Activated B cell treated with CpG ODN at 0.5 μM for 24 hours (primary cell): ENCODE measurements at regions of chr11 and their contacts with region 1.

Region 1: DNA sequence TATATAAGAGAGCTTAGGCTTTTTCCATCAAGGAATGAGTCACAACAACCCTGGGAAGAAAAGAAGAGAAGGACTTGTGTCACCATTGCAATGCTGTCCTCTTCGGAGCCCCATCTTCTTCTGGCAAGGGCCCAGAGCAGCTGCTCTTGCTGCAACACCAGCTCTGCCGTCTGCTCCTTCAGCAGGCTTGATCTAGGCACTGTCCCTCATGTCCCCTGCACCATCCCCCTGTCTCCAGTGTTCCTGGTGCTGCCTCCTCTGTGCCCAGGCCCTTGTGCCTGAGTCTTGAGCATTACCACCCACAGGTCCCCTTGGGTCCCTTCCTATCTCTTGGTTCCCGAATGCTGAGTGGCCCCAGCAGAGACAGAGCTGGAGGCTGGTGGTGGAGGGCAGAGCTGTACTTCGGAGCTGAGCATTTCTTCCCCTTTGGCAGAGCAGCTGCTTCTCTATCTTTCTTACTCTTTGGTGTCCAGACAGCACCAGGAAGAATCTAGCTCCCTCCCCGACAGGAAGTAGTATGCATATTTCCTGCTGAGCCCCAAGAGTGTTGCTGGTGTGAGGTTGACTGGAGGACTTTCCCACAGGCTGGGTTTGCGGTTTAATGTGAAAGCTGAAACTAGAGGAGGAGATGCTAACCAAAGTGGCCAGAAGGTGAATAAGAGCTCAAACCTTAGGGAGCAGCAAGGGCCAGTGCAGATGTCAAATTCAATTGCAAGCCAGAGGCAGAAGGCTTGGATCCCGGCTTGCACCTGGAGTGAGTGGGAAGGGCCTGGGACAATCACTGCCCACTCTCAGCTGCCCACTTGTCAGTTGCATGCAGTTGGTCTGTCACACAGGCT is 27.8 kb downstream of the WEE1 start:
- DNase-seq: peak; percentile 53
- ATAC-seq: peak; percentile 76
- H3K4me3 Mint-ChIP-seq: peak overlapping the region; percentile 85
- H3K27ac Mint-ChIP-seq: peak overlapping the region; percentile 96
- H3K4me1 Mint-ChIP-seq: peaks cover 59% of the 10 kb centered on the region
- H3K27me3 Mint-ChIP-seq: no peaks in the 10 kb centered on the region
- CTCF ChIP-seq: no peak

Region 2: DNA sequence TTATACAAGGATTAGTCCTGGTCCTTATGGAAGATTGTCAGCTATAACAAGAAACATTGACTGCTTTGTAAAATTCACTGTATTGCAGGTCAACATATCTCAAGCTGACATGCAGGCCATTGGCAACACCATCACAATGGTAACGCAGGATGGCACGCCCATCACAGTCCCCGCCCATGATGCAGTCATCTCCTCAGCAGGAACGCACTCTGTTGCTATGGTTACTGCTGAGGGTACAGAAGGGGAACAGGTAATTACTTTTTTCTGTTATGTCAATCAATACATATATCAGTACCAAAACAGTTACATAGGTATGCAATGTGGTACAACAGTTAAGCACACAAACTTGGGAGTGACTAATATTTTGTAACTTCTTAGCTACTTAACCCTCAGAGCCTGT is 85.1 kb before region 1 on chr11:
- CTCF ChIA-PET with region 1: no interaction called
- POLR2A ChIA-PET with region 1: no interaction called
- intact Hi-C with region 1: no loop called
- DNase-seq: no peak
- ATAC-seq: no peak
- H3K4me3 Mint-ChIP-seq: no peak overlapping the region
- H3K27ac Mint-ChIP-seq: no peak overlapping the region
- H3K4me1 Mint-ChIP-seq: peaks cover under 1% of the 10 kb centered on the region
- H3K27me3 Mint-ChIP-seq: no peaks in the 10 kb centered on the region
- CTCF ChIP-seq: no peak

Region 3: DNA sequence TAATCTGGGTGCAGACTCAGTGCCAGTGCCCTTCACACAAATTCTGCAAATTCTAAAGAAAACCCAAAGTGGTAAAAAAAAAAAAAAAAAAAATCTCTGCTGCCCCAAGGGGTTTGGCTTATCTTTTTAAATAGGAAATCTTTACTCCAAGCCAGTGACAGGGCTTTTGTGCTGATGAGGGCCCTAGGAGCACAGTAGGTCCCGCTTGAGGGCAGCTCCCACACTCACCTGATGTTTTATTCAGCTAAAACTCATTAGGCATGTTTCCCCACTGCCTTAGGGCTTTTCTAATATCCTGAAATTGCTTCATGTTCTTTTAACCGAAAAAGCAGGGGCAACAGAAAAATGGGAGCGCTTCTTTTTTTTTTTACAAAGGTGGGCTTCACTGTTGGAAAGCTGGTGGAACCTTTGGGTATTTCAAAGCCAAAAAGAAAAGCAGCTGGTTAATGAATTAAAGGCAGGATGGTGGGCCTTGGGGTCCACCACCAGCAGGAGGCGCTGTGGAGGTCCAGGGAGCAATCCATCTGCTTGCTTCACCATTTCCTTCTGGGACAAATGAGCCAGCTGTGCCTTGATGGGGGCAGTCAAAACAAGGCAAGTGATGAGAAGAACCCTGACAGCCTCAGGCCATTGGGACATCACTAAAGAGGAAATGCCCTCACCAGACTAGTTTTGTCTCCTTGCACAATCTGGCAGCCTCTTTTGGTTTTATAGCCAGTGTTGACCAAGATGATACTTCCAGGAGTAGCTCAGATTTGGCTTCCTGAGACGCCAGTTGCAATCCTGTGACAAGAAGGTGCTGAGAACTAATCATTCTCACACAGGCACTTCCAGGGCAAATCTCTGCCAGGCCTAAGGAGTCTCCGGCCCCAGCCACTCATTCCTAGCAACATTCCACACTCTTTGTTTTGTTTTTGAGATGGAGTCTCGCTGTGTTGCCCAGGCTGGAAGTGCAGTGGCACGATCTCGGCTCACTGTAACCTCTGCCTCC is 66.2 kb before region 1 on chr11:
- CTCF ChIA-PET with region 1: interaction called, 22 read pairs
- POLR2A ChIA-PET with region 1: interaction called, 13 read pairs
- intact Hi-C with region 1: loop called (anchors 1 kb)
- DNase-seq: peak; percentile 71
- ATAC-seq: peak; percentile 71
- H3K4me3 Mint-ChIP-seq: no peak overlapping the region
- H3K27ac Mint-ChIP-seq: no peak overlapping the region
- H3K4me1 Mint-ChIP-seq: peaks cover 5% of the 10 kb centered on the region
- H3K27me3 Mint-ChIP-seq: no peaks in the 10 kb centered on the region
- CTCF ChIP-seq: no peak

Region 4: GRCh38 chr11:9565822-9566560 is 35.3 kb before region 1 on chr11:
- CTCF ChIA-PET with region 1: interaction called, 5 read pairs
- POLR2A ChIA-PET with region 1: interaction called, 12 read pairs
- intact Hi-C with region 1: no loop called
- DNase-seq: no peak
- ATAC-seq: peak; percentile 81
- H3K4me3 Mint-ChIP-seq: peak overlapping the region; percentile 12
- H3K27ac Mint-ChIP-seq: peak overlapping the region; percentile 80
- H3K4me1 Mint-ChIP-seq: peaks cover 40% of the 10 kb centered on the region
- H3K27me3 Mint-ChIP-seq: no peaks in the 10 kb centered on the region
- CTCF ChIP-seq: no peak

Region 5: GRCh38 chr11:9573052-9573774 is 28.0 kb before region 1 on chr11 and contains the start of gene WEE1:
- CTCF ChIA-PET with region 1: interaction called, 6 read pairs
- POLR2A ChIA-PET with region 1: interaction called, 40 read pairs
- intact Hi-C with region 1: loop called (anchors 1 kb)
- DNase-seq: peak; percentile 97
- ATAC-seq: peak; percentile 90
- H3K4me3 Mint-ChIP-seq: peak within 1 kb of the TSS; percentile 95
- H3K27ac Mint-ChIP-seq: peak within 1 kb of the TSS; percentile 85
- H3K4me1 Mint-ChIP-seq: peaks cover 69% of the 10 kb centered on the region
- H3K27me3 Mint-ChIP-seq: no peaks in the 10 kb centered on the region
- CTCF ChIP-seq: no peak
- total RNA-seq, gene WEE1: 29.4 and 33.7 TPM in 2 replicates

Region 6: GRCh38 chr11:9672288-9672916 is 71.1 kb after region 1 on chr11:
- CTCF ChIA-PET with region 1: interaction called, 3 read pairs
- POLR2A ChIA-PET with region 1: interaction called, 11 read pairs
- intact Hi-C with region 1: no loop called
- DNase-seq: no peak
- ATAC-seq: no peak
- H3K4me3 Mint-ChIP-seq: no peak overlapping the region
- H3K27ac Mint-ChIP-seq: peak overlapping the region; percentile 94
- H3K4me1 Mint-ChIP-seq: peaks cover 71% of the 10 kb centered on the region
- H3K27me3 Mint-ChIP-seq: no peaks in the 10 kb centered on the region
- CTCF ChIP-seq: no peak

Region 7: GRCh38 chr11:9688716-9689511 is 87.7 kb after region 1 on chr11:
- CTCF ChIA-PET with region 1: no interaction called
- POLR2A ChIA-PET with region 1: interaction called, 10 read pairs
- intact Hi-C with region 1: no loop called
- DNase-seq: no peak
- ATAC-seq: peak; percentile 80
- H3K4me3 Mint-ChIP-seq: no peak overlapping the region
- H3K27ac Mint-ChIP-seq: no peak overlapping the region
- H3K4me1 Mint-ChIP-seq: peaks cover 52% of the 10 kb centered on the region
- H3K27me3 Mint-ChIP-seq: no peaks in the 10 kb centered on the region
- CTCF ChIP-seq: no peak